ENCODE measurements at regions of chr6 and their contacts with region 1.

Region 1: GRCh38 chr6:140183881-140184280 is 809.4 kb upstream of the CITED2 start:
- DNase-seq: peak; percentile 91
- H3K4me3 ChIP-seq: no peak overlapping the region
- H3K27me3 ChIP-seq: no peaks in the 10 kb centered on the region
- CTCF ChIP-seq: no peak

Region 2: GRCh38 chr6:140346461-140346860 is 162.6 kb after region 1 on chr6:
- CTCF ChIA-PET with region 1: no interaction called
- POLR2A ChIA-PET with region 1: interaction called, 14 read pairs
- DNase-seq: peak; percentile 59
- H3K4me3 ChIP-seq: no peak overlapping the region
- H3K27me3 ChIP-seq: no peaks in the 10 kb centered on the region
- CTCF ChIP-seq: no peak

Region 3: DNA sequence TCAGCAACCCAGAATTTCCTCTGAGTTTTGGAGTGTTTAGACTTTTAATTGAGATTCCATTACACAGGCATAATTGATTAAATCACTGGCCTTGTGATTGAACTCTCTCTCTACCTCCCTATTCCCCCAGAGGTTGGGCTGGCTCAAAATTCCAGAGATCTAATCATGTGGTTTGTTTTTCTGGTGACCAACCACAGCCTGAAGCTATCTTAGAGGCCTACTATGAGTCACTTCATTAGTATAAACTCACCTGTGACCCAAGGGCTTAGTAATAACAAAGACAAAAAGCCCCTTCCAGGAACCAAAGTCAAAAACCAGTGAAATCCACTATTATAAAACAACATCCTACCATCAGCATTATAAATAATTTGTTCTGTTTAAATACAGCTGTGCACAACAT is 183.1 kb after region 1 on chr6:
- CTCF ChIA-PET with region 1: no interaction called
- POLR2A ChIA-PET with region 1: no interaction called
- DNase-seq: peak; percentile 61
- H3K4me3 ChIP-seq: no peak overlapping the region
- H3K27me3 ChIP-seq: no peaks in the 10 kb centered on the region
- CTCF ChIP-seq: no peak

Region 4: DNA sequence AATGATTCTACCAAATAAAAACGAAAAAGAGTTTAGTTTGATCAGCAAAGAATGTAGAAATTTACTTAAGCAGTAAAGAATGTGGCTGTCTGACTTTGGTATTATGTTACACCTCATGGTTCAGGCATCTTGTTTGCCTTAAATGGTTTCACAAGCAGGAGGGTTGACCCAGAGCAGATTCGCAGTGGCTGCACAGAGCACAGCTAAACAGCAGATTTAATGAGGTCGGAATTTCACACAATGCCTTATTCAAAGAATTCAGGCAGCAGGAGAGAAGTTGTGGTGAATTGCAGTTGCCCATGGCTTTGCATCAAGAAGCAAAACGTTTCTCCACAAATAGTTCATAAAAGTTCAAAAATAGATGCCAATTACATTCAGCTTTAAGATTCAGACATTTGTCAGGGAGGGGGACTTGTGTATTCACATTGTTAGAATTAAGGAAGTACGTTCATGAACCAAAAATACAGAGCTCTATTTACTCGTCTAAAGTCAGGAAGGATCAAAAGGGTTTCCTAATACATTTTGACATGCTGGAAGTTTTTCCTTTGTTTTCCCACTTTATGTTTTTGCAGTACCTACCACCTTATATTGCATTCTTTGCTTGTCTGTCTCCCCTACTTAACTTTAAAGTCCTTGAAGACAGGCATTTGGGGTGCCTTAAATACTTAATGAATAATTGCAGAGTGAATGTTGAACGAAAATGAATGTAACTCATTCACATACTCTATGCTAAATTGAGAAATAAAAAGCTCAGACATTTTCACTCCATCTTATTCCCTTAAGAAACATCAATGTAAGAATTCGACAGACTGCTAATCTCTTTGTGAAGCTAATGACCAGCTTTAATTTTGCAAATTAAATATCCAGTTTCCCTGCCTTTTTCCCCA is 354.2 kb after region 1 on chr6:
- CTCF ChIA-PET with region 1: no interaction called
- POLR2A ChIA-PET with region 1: interaction called, 10 read pairs
- DNase-seq: peak; percentile 100
- H3K4me3 ChIP-seq: no peak overlapping the region
- H3K27me3 ChIP-seq: no peaks in the 10 kb centered on the region
- CTCF ChIP-seq: no peak